H1 (cell line): ENCODE measurements at regions of chr14 and their contacts with region 1.

Region 1: GRCh38 chr14:70013269-70013873 is 134.2 kb downstream of the SMOC1 start:
- DNase-seq: peak; percentile 34 to 94
- H3K4me3 ChIP-seq: no peak overlapping the region
- H3K27ac ChIP-seq: no peak overlapping the region
- H3K4me1 ChIP-seq: peaks cover 0 to 8% (median 5%) of the 10 kb centered on the region in 4 experiments; a peak in 3 of 7 replicates
- H3K27me3 ChIP-seq: no peaks in the 10 kb centered on the region
- CTCF ChIP-seq: peak; percentile 85 to 92 (median 89)
- EP300 ChIP-seq: no peak
- POLR2A ChIP-seq: no peak
- RAD21 ChIP-seq: peak; percentile 77 to 87

Region 2: DNA sequence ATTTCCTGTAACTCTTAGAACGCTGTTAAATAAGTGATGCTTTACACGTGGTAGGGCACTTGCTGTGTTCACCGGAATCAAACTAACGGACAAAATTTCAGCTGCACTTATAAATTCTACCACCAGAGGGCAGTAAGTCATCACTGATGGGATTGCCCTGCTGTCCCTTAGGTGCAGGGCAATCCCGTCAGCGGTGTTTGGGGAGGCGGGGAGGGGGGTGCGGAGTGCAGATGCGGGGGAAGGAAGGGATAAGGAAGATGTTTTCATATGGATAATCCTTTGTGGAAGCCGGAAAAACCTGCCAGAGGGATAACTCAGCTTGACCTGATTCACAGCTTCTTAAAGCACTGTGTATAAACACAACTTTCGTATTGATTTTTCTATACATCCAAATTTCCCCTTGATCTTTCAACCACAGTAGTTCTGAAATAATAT is 194.6 kb before region 1 on chr14:
- CTCF ChIA-PET with region 1: interaction called, 21 read pairs
- POLR2A ChIA-PET with region 1: no interaction called
- DNase-seq: peak; percentile 51 to 79
- H3K4me3 ChIP-seq: no peak overlapping the region
- H3K27ac ChIP-seq: no peak overlapping the region
- H3K4me1 ChIP-seq: no peaks in the 10 kb centered on the region
- H3K27me3 ChIP-seq: no peaks in the 10 kb centered on the region
- CTCF ChIP-seq: peak; percentile 44 to 95 (median 81)
- EP300 ChIP-seq: peak in 1 of 2 experiments; percentile 48; a peak in 1 of 3 replicates
- POLR2A ChIP-seq: no peak
- RAD21 ChIP-seq: peak; percentile 98 to 99

Region 3: DNA sequence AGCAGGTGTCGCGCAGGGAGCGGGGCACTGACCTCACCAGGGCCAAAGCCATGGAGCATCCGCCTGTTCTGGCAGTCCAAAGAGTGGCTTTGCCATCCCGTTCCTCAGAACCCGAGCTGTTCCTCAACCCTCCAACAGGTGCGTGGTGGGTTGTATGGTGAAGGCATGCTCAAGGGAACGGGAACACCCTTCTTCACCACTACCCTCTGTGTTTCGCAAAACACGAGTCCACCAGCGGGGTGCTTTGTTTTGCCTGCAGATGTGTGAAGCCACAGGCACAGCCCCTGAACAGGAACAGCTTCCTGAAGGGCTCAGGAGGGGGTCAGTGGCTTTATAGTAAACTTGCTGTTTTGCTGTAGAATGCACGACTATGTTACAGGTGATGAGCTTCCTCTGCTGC is 81.4 kb before region 1 on chr14:
- CTCF ChIA-PET with region 1: interaction called, 13 read pairs
- POLR2A ChIA-PET with region 1: no interaction called
- DNase-seq: no peak
- H3K4me3 ChIP-seq: no peak overlapping the region
- H3K27ac ChIP-seq: no peak overlapping the region
- H3K4me1 ChIP-seq: peaks cover 0 to 7% (median 2%) of the 10 kb centered on the region in 4 experiments; a peak in 4 of 7 replicates
- H3K27me3 ChIP-seq: no peaks in the 10 kb centered on the region
- CTCF ChIP-seq: peak; percentile 22 to 54 (median 41); a peak in 3 of 4 replicates
- EP300 ChIP-seq: no peak
- POLR2A ChIP-seq: no peak
- RAD21 ChIP-seq: no peak

Region 4: GRCh38 chr14:69968681-69969080 is 44.7 kb before region 1 on chr14:
- CTCF ChIA-PET with region 1: interaction called, 14 read pairs
- POLR2A ChIA-PET with region 1: no interaction called
- DNase-seq: no peak
- H3K4me3 ChIP-seq: no peak overlapping the region
- H3K27ac ChIP-seq: no peak overlapping the region
- H3K4me1 ChIP-seq: no peaks in the 10 kb centered on the region; a peak in 1 of 7 replicates
- H3K27me3 ChIP-seq: no peaks in the 10 kb centered on the region
- CTCF ChIP-seq: no peak
- EP300 ChIP-seq: no peak
- POLR2A ChIP-seq: no peak
- RAD21 ChIP-seq: no peak

Region 5: DNA sequence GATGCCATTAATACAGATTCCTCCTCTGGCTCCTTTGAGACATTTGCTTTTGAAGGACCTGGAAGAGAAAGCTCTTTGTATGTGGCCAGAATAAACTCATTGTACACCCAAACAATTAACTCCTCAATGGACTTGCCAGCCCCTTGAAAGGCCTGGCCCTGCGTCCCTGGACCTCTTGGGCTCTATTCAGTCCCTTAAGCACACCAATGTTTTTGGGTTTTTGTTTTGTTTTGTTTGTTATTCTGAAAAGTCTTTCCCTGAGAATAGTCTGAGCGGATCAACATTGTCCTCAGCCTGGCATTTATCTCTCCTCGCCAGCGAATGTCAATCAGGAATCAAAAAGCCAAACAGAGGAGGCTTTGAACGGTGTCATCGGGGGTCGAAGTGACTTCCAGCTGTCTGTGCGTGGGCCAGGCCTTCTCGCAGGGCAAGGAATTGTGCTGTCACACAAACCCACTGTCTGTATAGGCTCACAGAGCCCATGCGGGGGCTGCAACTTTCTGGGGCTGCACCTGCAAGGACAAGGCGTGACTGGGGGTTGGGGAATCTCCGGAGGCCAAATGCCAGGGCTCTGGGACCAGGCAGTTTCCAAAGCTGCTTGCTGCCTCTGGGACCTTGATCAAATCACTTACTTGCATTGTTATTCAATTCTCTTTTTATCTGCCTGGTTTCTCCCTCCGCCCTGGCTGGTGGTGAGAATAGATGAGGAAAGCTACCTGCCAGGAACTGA is 25.8 kb before region 1 on chr14:
- CTCF ChIA-PET with region 1: interaction called, 37 read pairs
- POLR2A ChIA-PET with region 1: interaction called, 3 read pairs
- DNase-seq: peak; percentile 33 to 60
- H3K4me3 ChIP-seq: peak overlapping the region in 2 of 4 experiments; percentile 9 to 39; a peak in 4 of 8 replicates
- H3K27ac ChIP-seq: peak overlapping the region; percentile 68
- H3K4me1 ChIP-seq: peaks cover 2 to 15% (median 10%) of the 10 kb centered on the region in 4 experiments; a peak in 5 of 7 replicates
- H3K27me3 ChIP-seq: no peaks in the 10 kb centered on the region; a peak in 1 of 7 replicates
- CTCF ChIP-seq: no peak
- EP300 ChIP-seq: no peak; a peak in 1 of 3 replicates
- POLR2A ChIP-seq: no peak
- RAD21 ChIP-seq: no peak

Region 6: DNA sequence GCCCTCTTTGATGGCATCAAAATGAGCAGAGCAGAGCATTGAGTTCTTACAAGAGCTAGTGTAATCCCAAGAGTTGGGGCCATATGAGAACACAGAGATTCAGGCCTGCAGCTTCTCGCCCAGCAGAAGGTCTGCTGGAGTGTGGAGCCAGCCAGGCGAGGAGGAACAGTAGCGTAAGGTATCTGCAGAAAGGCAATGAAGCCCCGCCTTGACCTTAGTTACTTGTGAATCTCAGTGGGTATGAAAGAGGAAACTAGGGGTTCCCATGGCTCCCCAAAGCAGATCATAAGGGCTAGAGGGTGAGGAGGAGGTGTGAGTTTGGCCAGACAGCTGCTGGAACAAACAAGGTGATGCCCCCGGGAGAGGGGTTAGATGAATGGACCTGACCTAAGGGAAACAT is 126.0 kb after region 1 on chr14:
- CTCF ChIA-PET with region 1: no interaction called
- POLR2A ChIA-PET with region 1: no interaction called
- DNase-seq: no peak
- H3K4me3 ChIP-seq: no peak overlapping the region
- H3K27ac ChIP-seq: no peak overlapping the region
- H3K4me1 ChIP-seq: peaks cover 0 to 2% (median 0%) of the 10 kb centered on the region in 4 experiments; a peak in 1 of 7 replicates
- H3K27me3 ChIP-seq: no peaks in the 10 kb centered on the region
- CTCF ChIP-seq: no peak
- EP300 ChIP-seq: no peak
- POLR2A ChIP-seq: no peak
- RAD21 ChIP-seq: no peak